ENCODE measurements at regions of chr12 and their contacts with region 1.

Region 1: DNA sequence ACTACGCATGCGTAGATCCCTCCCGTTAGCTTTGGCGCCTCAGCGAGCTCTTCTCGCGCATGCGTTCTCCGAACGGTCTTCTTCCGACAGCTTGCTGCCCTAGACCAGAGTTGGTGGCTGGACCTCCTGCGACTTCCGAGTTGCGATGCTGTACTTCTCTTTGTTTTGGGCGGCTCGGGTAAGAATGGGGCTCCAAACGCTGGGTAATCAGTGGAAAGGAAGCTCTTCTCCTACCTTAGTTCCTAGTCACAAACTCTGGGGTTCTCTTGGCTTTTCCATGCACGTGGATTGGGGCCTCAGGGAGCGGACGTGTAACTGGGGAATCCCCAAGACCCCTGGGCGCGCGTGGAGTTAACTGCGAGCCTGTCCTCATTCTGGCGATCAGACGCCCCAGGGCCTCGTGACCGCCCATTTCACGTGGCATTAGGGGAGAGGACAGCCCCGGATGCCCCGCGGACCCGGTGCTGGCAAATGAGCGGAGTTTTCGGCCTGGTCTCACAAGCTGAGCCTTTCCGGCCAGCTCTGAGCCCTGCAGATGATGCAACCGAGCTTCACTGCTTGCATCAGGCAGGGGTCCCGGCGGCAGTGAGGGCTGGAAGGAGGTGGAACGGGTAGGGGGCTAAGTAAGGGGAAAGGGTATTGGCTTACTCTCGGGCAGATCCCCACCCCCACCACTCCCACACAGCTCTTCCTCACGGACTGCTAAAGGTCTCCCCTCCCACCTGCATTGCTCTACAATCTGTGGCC is at the start of gene SHMT2:
- DNase-seq: peak; percentile 93
- H3K4me3 Mint-ChIP-seq: peak within 1 kb of the TSS; percentile 94
- H3K27ac Mint-ChIP-seq: peak within 1 kb of the TSS; percentile 80
- H3K4me1 Mint-ChIP-seq: peaks cover 75% of the 10 kb centered on the region
- H3K27me3 Mint-ChIP-seq: peaks cover 22% of the 10 kb centered on the region
- total RNA-seq, gene SHMT2: 224 to 244 TPM

Region 2: DNA sequence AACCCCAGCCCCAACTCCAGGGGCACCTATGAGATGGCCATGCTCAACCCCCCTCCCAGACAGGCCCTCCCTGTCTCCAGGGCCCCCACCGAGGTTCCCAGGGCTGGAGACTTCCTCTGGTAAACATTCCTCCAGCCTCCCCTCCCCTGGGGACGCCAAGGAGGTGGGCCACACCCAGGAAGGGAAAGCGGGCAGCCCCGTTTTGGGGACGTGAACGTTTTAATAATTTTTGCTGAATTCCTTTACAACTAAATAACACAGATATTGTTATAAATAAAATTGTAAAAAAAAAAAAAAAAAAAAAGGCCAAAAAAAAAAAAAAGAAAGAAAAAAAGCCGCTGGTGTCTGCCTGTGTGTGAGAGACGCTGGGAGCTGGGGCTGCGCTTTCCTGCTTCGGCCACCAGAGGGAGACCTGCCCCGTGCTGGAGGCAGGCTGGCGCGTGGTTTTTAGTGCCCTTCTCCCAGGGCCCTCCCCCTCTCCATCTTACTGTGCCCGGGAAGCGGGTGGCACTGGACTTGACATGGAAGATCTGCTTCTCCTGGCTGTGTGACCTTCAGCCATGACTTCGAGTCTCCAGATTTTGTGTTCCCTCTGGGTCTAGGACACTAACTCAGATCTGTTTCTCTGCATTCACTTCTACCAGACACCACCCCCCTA is 16.6 kb before region 1 on chr12:
- CTCF ChIA-PET with region 1: interaction called, 110 read pairs
- POLR2A ChIA-PET with region 1: interaction called, 19 read pairs
- DNase-seq: peak; percentile 87
- H3K4me3 Mint-ChIP-seq: no peak overlapping the region
- H3K27ac Mint-ChIP-seq: peak overlapping the region; percentile 3
- H3K4me1 Mint-ChIP-seq: peaks cover 39% of the 10 kb centered on the region
- H3K27me3 Mint-ChIP-seq: peaks cover 41% of the 10 kb centered on the region